Activated T-helper 2 cell treated with anti-CD3 and anti-CD28 coated beads, Interferon-gamma antibody, Interleukin-2, Interleukin-4, amounts not matched to agents 10 μg/mL and 5 μg/mL and 100 μg/mL, durations not matched to agents 14 hours and 24 hours and 36 hours (primary cell): ENCODE measurements at regions of chr19 and their contacts with region 1.

Region 1: GRCh38 chr19:34501339-34502320 is 20.1 kb downstream of the WTIP start:
- DNase-seq: peak; percentile 78
- H3K4me3 Mint-ChIP-seq: no peak overlapping the region
- H3K27ac Mint-ChIP-seq: no peak overlapping the region
- H3K4me1 Mint-ChIP-seq: no peaks in the 10 kb centered on the region
- H3K27me3 Mint-ChIP-seq: peaks cover 6% of the 10 kb centered on the region

Region 2: DNA sequence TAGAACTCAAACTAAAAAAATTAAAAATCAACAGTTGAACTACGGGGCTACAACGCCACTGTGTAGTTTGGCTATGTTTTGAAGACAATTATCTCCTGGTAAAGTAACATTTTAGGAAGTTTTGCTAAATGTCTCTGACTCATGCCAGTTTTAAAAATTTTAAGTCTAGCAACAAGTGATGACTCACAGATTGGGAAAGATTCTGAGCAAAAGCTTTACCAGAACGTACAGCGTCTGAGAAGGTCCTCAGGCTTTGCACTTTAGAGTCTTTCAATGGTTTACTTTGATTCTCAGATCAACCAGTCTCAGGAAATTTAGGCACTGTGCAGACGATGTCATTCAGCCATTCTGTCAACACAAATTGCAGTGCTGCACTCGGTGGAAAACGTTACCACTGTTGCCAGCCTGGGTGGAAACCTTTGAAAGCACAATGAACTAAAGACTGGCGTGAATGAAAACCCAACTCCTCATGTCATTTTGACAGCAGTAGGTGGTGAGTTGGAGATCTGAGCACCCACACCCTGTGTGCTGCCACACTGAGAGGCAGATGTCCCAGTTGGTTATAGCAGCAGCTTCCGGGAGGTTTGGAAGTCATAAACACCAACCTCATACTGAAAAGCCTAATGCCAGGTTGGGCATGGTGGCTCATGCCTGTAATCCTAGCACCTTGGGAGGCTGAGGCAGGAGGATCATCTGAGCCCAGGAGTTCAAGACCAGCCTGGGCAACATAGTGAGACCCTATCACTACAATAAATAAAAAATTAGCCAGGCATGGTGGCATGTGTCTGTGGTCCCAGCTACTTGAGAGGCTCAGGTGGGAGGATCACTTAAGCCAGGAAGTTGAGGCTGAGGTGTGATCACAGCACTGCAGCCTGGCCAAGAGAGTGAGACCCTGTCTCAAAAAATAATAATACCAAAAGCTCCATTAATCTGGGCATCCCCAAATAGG is 26.3 kb before region 1 on chr19:
- intact Hi-C with region 1: loop called (anchors 2 kb)
- DNase-seq: no peak
- H3K4me3 Mint-ChIP-seq: no peak overlapping the region
- H3K27ac Mint-ChIP-seq: peak overlapping the region; percentile 18
- H3K4me1 Mint-ChIP-seq: peaks cover 7% of the 10 kb centered on the region
- H3K27me3 Mint-ChIP-seq: peaks cover 13% of the 10 kb centered on the region

Region 3: DNA sequence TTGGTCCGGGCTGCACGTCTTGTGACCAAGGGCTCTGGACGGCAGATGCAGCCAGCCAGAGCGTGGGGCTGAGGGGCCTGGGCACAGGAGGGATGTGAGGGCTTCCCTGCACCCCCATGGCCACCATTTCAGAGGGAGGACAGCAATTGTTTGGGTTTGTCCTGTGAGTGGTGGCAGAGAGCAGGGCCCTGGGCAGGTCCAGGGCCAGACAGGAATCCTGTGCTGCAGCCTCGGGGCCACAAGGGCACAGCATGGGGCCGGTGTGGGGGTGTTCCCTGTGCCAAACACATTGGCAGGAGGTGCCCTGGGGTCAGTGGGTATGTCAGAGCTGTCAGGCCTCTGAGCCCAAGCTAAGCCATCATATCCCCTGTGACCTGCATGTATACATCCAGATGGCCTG is 12.1 kb after region 1 on chr19:
- intact Hi-C with region 1: no loop called
- DNase-seq: no peak
- H3K4me3 Mint-ChIP-seq: no peak overlapping the region
- H3K27ac Mint-ChIP-seq: no peak overlapping the region
- H3K4me1 Mint-ChIP-seq: no peaks in the 10 kb centered on the region
- H3K27me3 Mint-ChIP-seq: no peaks in the 10 kb centered on the region

Region 4: GRCh38 chr19:34534206-34534605 is 32.6 kb after region 1 on chr19:
- intact Hi-C with region 1: no loop called
- DNase-seq: no peak
- H3K4me3 Mint-ChIP-seq: no peak overlapping the region
- H3K27ac Mint-ChIP-seq: no peak overlapping the region
- H3K4me1 Mint-ChIP-seq: no peaks in the 10 kb centered on the region
- H3K27me3 Mint-ChIP-seq: peaks cover 5% of the 10 kb centered on the region

Region 5: DNA sequence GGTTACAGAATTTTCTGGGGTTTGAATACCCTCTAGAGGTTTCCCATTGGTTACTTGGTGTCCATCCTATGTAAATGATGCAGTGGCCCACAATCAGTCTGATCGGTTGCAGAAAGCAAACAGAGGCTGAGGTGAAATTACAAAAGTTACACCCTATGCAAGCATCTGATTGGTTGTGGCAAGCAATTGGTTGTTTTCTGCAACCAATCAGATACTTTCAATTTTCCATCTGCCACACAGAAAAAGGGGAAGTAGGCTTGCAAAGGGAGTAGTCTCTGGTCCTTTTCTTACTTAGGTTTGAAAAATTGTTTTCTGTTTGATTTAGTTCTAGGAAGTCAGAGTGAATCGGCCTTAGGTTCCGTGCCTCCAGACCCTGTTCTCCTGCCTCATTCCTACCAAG is 73.1 kb after region 1 on chr19:
- intact Hi-C with region 1: no loop called
- DNase-seq: no peak
- H3K4me3 Mint-ChIP-seq: no peak overlapping the region
- H3K27ac Mint-ChIP-seq: no peak overlapping the region
- H3K4me1 Mint-ChIP-seq: no peaks in the 10 kb centered on the region
- H3K27me3 Mint-ChIP-seq: no peaks in the 10 kb centered on the region

Region 6: DNA sequence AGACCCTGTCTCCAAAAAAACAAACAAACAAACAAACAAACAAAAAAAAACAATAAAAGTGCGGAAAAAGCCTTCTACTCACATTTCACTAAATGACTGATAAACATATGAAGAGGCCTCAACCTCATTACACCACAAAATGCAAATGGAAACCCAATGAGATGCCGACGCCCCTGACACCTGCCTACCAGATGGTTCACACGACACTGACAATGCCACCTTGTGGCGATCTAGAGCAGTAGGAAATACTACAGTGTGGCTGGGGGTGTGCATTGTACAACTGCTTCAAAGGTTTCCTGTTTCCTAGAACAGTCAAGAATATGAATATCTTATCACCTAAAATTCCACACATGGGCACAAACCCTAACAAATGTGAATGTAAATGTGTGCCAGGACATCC is 161.3 kb after region 1 on chr19:
- intact Hi-C with region 1: no loop called
- DNase-seq: no peak
- H3K4me3 Mint-ChIP-seq: no peak overlapping the region
- H3K27ac Mint-ChIP-seq: no peak overlapping the region
- H3K4me1 Mint-ChIP-seq: peaks cover 13% of the 10 kb centered on the region
- H3K27me3 Mint-ChIP-seq: no peaks in the 10 kb centered on the region

Region 7: GRCh38 chr19:34712395-34713261 is 211.0 kb after region 1 on chr19:
- intact Hi-C with region 1: loop called (anchors 2 kb)
- DNase-seq: peak; percentile 33
- H3K4me3 Mint-ChIP-seq: no peak overlapping the region
- H3K27ac Mint-ChIP-seq: no peak overlapping the region
- H3K4me1 Mint-ChIP-seq: peaks cover 1% of the 10 kb centered on the region
- H3K27me3 Mint-ChIP-seq: peaks cover 3% of the 10 kb centered on the region